ENCODE measurements at regions of chr3 and their contacts with region 1.

Region 1: DNA sequence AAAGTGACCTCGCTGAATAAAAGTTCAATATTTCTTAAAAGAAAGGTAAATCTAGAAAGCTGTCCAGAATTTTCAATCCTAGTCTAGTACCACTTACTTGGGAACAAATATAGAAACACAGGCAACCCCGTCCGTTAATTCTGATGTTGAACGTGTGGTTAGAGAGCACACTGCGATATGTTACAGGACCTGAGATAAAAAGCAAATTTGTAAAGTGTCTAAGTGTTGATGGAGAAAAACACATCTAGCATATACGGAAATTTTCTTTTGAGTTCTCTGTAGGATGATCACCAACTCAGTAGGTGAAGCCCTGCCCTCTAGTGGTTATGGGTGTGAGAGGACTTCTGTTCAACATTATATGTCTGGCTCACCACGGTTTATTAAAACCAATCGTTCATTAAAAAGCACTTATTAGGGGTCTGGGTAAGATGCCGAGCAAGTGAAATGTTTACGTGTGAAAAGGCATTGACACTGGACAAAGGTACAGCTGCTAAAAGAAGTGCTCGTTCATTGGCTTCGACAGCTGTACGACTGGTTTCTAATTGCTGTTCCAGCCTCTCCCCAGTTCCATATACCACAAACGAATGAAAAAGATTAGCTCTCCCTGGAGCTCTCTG is 1.0 kb upstream of the ATP2C1 start:
- DNase-seq: peak; percentile 33 to 87 (median 46)
- ATAC-seq: peak; percentile 68
- H3K4me3 ChIP-seq: peak overlapping the region; percentile 66
- H3K4me3 Mint-ChIP-seq: peak overlapping the region; percentile 98
- H3K27ac ChIP-seq: peak overlapping the region; percentile 90 to 96
- H3K27ac Mint-ChIP-seq: peak overlapping the region; percentile 96
- H3K4me1 ChIP-seq: peaks cover 7% of the 10 kb centered on the region
- H3K4me1 Mint-ChIP-seq: peaks cover 42% of the 10 kb centered on the region
- H3K27me3 ChIP-seq: no peaks in the 10 kb centered on the region
- H3K27me3 Mint-ChIP-seq: no peaks in the 10 kb centered on the region
- CTCF ChIP-seq: peak; percentile 96

Region 2: DNA sequence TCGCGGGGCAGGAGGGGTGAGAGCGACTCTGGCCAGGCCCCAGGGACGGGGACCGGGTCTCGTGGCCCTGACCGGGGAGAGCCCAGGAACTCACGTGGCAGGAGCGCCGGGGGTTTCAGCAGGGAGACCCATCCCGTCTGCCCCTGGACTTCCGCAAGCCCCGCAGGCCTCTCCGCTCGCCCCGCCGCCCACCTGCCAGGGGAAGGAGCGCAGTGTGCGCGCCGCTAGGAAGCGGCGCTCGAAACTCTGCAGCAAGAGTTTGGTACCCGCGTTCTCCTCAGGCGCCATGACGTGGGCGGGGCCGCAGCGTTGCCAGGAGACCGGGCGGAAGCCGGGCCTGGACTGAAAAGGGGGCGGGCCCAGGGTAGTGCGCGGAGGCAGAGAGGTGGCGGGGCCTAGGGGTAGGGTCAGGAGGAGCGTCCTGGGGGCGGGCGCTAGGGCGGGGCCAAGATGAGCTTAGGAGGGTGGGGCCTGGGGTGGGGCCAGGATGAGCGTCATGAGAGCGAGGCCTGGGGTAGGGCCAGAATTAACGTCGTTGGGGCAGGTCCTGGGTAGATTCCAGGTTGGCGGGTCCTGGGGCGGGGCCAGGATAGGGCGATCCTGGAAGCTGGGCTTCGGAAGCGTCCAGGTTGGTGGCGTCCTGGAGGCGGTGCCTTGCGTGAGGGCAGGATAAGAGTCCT is 781.5 kb before region 1 on chr3:
- CTCF ChIA-PET with region 1: interaction called, 3 read pairs
- POLR2A ChIA-PET with region 1: interaction called, 5 read pairs
- intact Hi-C with region 1: loop called in 1 of 2 experiments (anchors 5 kb)
- DNase-seq: peak; percentile 98 to 100 (median 99)
- ATAC-seq: peak; percentile 100
- H3K4me3 ChIP-seq: peak overlapping the region; percentile 65
- H3K4me3 Mint-ChIP-seq: peak overlapping the region; percentile 99
- H3K27ac ChIP-seq: peak overlapping the region; percentile 67 to 95
- H3K27ac Mint-ChIP-seq: peak overlapping the region; percentile 99
- H3K4me1 ChIP-seq: peaks cover 9% of the 10 kb centered on the region
- H3K4me1 Mint-ChIP-seq: peaks cover 14% of the 10 kb centered on the region
- H3K27me3 ChIP-seq: no peaks in the 10 kb centered on the region
- H3K27me3 Mint-ChIP-seq: no peaks in the 10 kb centered on the region
- CTCF ChIP-seq: no peak

Region 3: DNA sequence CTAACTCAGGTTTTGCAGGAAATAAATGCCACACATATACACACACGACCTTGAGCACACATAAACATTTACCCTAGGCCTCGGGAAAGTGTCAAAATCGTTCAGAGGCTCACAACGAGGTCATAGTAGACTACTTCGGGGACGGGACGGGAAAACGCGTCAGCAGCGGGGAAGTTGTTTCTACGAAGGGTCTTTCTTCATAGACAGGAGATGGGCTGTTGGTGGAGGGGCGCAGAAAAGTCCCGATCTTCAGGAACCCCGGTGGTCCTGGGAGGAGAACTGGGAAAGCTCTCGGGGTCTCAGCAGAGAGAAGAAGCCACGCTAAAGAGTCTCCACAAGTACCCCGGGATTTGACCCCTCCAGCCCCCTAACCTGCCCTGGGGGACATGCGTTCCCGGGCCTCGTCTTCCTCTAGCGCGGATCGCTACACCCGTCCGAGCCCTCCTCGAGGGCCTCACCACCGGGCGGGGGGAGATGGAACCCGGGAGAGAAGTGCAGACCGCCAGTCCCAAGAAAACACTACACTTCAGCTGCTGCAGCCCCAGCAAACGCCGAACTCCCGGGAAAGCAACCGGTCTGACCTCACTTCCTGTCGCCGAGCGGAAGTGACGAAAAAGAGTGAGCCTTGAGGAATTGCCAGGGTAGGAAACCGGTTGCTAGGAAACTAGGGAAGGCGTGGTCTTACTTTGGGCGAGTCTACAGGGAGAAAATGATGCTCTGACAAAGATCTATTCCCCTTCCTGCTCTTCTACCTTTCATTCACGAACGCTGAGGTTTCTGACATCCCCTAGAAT is 146.4 kb before region 1 on chr3 and contains the start of gene PIK3R4:
- CTCF ChIA-PET with region 1: interaction called, 14 read pairs
- POLR2A ChIA-PET with region 1: interaction called, 19 read pairs
- intact Hi-C with region 1: loop called in 1 of 2 experiments (anchors 2 kb)
- DNase-seq: peak; percentile 84 to 99 (median 90)
- ATAC-seq: peak; percentile 81
- H3K4me3 ChIP-seq: peak within 1 kb of the TSS; percentile 90
- H3K4me3 Mint-ChIP-seq: peak within 1 kb of the TSS; percentile 90
- H3K27ac ChIP-seq: peak within 1 kb of the TSS; percentile 81 to 95
- H3K27ac Mint-ChIP-seq: peak within 1 kb of the TSS; percentile 93
- H3K4me1 ChIP-seq: peaks cover 31% of the 10 kb centered on the region
- H3K4me1 Mint-ChIP-seq: peaks cover 58% of the 10 kb centered on the region
- H3K27me3 ChIP-seq: no peaks in the 10 kb centered on the region
- H3K27me3 Mint-ChIP-seq: no peaks in the 10 kb centered on the region
- CTCF ChIP-seq: no peak
- total RNA-seq, gene PIK3R4: 13.7 to 14.5 TPM

Region 4: DNA sequence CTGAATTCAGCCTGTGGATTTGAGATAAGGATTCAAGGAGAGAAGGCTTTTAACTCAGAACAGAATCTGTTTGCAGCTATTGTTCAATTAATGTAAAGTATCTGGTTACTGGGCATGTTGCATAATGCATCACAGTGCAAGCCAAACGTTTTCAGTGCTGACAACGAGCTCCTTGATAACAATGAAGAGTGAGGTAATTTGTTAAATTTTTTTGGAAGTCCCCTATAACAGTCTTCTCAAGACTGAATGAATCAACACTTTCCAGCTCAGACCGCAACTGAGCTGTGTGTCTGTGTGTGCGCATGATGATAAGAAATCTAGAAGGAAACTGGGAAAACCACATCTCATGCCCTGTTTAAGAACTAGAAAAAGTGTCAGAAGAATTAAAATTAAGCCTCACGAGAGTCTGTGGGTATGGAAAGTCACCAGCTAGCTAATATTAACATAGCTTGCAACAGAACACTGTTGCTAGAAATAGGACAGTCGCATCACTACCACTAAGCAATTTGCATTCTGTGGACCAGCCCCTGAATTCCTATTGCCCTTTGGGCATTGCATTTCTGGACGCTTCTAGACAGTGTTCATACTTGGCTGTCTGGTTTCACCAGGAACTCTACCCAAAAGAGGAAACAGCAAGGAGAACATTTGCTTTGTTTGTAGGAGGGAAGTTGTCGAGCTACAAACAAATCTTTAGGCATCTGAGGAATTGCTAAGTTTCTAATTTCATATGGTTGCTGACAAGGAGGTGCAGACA is 42.6 kb before region 1 on chr3:
- CTCF ChIA-PET with region 1: interaction called, 5 read pairs
- POLR2A ChIA-PET with region 1: interaction called, 9 read pairs
- intact Hi-C with region 1: loop called in 1 of 2 experiments (anchors 5 kb)
- DNase-seq: peak in 6 of 14 experiments; percentile 3 to 77 (median 21)
- ATAC-seq: peak; percentile 87
- H3K4me3 ChIP-seq: peak overlapping the region; percentile 1
- H3K4me3 Mint-ChIP-seq: peak overlapping the region; percentile 3
- H3K27ac ChIP-seq: no peak overlapping the region
- H3K27ac Mint-ChIP-seq: peak overlapping the region; percentile 34
- H3K4me1 ChIP-seq: peaks cover 11% of the 10 kb centered on the region
- H3K4me1 Mint-ChIP-seq: peaks cover 14% of the 10 kb centered on the region
- H3K27me3 ChIP-seq: no peaks in the 10 kb centered on the region
- H3K27me3 Mint-ChIP-seq: peaks cover 3% of the 10 kb centered on the region
- CTCF ChIP-seq: no peak

Region 5: DNA sequence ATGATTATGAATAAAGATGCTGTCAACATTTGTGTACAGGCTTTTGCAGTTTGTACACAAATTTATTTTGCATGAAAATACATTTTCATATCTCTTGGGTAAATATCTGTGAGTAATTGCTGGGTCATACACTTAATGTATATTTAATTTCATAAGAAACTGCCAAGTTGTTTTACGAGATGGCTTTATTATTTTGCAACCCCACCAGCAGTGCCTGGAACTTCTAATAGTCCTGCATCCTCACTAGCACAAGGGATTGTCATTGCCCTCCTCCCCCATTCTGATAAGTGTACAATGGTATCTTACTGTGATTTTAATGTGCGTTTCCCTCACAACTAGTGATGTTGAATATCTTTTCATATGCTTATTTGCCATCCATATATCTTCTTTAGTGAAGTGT is 88.6 kb after region 1 on chr3:
- CTCF ChIA-PET with region 1: no interaction called
- POLR2A ChIA-PET with region 1: no interaction called
- intact Hi-C with region 1: no loop called
- DNase-seq: no peak
- ATAC-seq: no peak
- H3K4me3 ChIP-seq: no peak overlapping the region
- H3K4me3 Mint-ChIP-seq: no peak overlapping the region
- H3K27ac ChIP-seq: no peak overlapping the region
- H3K27ac Mint-ChIP-seq: no peak overlapping the region
- H3K4me1 ChIP-seq: no peaks in the 10 kb centered on the region
- H3K4me1 Mint-ChIP-seq: no peaks in the 10 kb centered on the region
- H3K27me3 ChIP-seq: no peaks in the 10 kb centered on the region
- H3K27me3 Mint-ChIP-seq: no peaks in the 10 kb centered on the region
- CTCF ChIP-seq: no peak

Region 6: GRCh38 chr3:131020122-131020693 is 127.3 kb after region 1 on chr3:
- CTCF ChIA-PET with region 1: no interaction called
- POLR2A ChIA-PET with region 1: interaction called, 32 read pairs
- intact Hi-C with region 1: loop called in 1 of 2 experiments (anchors 5 kb)
- DNase-seq: peak in 1 of 14 experiments; percentile 22
- ATAC-seq: no peak
- H3K4me3 ChIP-seq: no peak overlapping the region
- H3K4me3 Mint-ChIP-seq: peak overlapping the region; percentile 11
- H3K27ac ChIP-seq: no peak overlapping the region
- H3K27ac Mint-ChIP-seq: peak overlapping the region; percentile 56
- H3K4me1 ChIP-seq: peaks cover 22% of the 10 kb centered on the region
- H3K4me1 Mint-ChIP-seq: peaks cover 69% of the 10 kb centered on the region
- H3K27me3 ChIP-seq: no peaks in the 10 kb centered on the region
- H3K27me3 Mint-ChIP-seq: no peaks in the 10 kb centered on the region
- CTCF ChIP-seq: no peak

Region 7: GRCh38 chr3:131381444-131382291 is 488.8 kb after region 1 on chr3 and contains the start of gene NUDT16:
- CTCF ChIA-PET with region 1: no interaction called
- POLR2A ChIA-PET with region 1: interaction called, 12 read pairs
- intact Hi-C with region 1: loop called in 1 of 2 experiments (anchors 10 kb)
- DNase-seq: peak; percentile 91 to 98 (median 96)
- ATAC-seq: peak; percentile 96
- H3K4me3 ChIP-seq: peak within 1 kb of the TSS; percentile 98
- H3K4me3 Mint-ChIP-seq: peak within 1 kb of the TSS; percentile 98
- H3K27ac ChIP-seq: peak within 1 kb of the TSS in 1 of 2 donors; percentile 11
- H3K27ac Mint-ChIP-seq: peak within 1 kb of the TSS; percentile 91
- H3K4me1 ChIP-seq: peaks cover 36% of the 10 kb centered on the region
- H3K4me1 Mint-ChIP-seq: peaks cover 48% of the 10 kb centered on the region
- H3K27me3 ChIP-seq: no peaks in the 10 kb centered on the region
- H3K27me3 Mint-ChIP-seq: no peaks in the 10 kb centered on the region
- CTCF ChIP-seq: peak; percentile 14
- total RNA-seq, gene NUDT16: 4.7 to 5.7 TPM

Region 8: DNA sequence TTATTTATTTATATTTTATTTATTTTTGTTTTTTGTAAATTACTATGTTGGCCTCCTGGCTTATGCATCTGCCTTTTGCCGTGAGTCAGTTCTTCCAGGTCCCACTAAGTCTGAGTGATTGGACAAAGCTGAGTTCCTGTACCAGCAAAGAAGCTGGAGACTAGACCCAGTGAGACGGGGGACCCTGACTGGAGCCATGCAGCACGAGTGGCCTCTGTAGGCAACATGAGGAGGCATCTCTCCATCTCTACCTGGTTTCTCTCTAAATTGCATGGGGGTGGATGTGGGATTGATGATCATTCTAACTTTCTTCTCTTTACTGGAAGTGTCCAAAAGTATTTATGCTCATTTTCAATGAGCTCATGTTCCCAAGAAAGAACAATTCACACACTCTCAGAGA is 765.2 kb after region 1 on chr3:
- CTCF ChIA-PET with region 1: no interaction called
- POLR2A ChIA-PET with region 1: no interaction called
- intact Hi-C with region 1: no loop called
- DNase-seq: no peak
- ATAC-seq: no peak
- H3K4me3 ChIP-seq: no peak overlapping the region
- H3K4me3 Mint-ChIP-seq: no peak overlapping the region
- H3K27ac ChIP-seq: no peak overlapping the region
- H3K27ac Mint-ChIP-seq: no peak overlapping the region
- H3K4me1 ChIP-seq: no peaks in the 10 kb centered on the region
- H3K4me1 Mint-ChIP-seq: no peaks in the 10 kb centered on the region
- H3K27me3 ChIP-seq: no peaks in the 10 kb centered on the region
- H3K27me3 Mint-ChIP-seq: peaks cover 21% of the 10 kb centered on the region
- CTCF ChIP-seq: no peak

Region 9: DNA sequence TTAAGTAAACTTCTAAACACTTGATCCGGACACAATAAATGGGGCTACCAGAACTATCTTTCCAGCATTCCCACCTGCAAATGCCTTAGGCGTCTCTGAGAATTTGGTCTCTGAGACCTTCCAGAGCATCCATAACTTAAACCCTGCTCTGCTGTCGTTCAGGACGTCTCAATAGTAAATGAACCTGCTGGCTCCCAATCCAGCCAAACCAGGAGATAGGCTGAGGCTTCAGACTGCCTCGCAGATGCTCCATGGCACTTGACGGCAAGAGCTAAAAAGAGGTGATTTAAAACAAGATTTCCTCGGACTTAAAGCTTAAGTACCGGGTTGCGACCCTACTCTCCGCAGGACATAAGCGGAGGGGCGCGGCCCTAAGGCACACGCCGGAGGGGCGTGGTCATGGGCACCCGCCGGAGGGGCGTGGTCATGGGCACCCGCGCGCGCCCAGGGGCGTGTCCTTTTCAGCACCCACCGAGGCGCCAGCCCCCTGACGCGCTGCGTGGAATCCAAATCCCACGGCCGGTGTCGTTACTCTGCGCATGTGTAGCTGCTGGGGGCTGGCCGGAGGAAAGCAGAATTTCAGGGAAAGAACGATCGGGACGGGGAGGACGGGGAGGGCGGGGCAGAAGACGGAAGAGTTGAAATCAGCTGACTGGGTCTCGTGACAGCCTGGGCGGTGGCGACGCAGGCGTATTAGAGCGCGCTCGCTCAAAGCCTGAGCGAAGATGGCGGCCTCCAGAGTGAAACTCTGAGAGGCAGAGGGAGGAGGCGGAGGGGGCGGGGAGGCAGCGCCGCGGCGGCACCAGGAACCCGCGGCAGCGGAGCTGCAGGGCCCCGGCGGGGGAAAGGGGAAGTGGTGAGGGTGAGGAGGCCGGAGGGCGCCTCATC is 1524.2 kb after region 1 on chr3 and contains the start of gene DNAJC13:
- CTCF ChIA-PET with region 1: no interaction called
- POLR2A ChIA-PET with region 1: interaction called, 4 read pairs
- intact Hi-C with region 1: loop called in 1 of 2 experiments (anchors 5 kb)
- DNase-seq: peak; percentile 81 to 98 (median 89)
- ATAC-seq: peak; percentile 93
- H3K4me3 ChIP-seq: peak within 1 kb of the TSS; percentile 91
- H3K4me3 Mint-ChIP-seq: peak within 1 kb of the TSS; percentile 97
- H3K27ac ChIP-seq: peak within 1 kb of the TSS; percentile 76 to 81
- H3K27ac Mint-ChIP-seq: peak within 1 kb of the TSS; percentile 91
- H3K4me1 ChIP-seq: peaks cover 12% of the 10 kb centered on the region
- H3K4me1 Mint-ChIP-seq: peaks cover 34% of the 10 kb centered on the region
- H3K27me3 ChIP-seq: no peaks in the 10 kb centered on the region
- H3K27me3 Mint-ChIP-seq: no peaks in the 10 kb centered on the region
- CTCF ChIP-seq: no peak
- total RNA-seq, gene DNAJC13: 13.5 to 14.3 TPM

Measured in CD4-positive, alpha-beta T cell (primary cell).